CD4-positive, alpha-beta memory T cell (primary cell): ENCODE measurements at regions of chr10 and their contacts with region 1.

Region 1: DNA sequence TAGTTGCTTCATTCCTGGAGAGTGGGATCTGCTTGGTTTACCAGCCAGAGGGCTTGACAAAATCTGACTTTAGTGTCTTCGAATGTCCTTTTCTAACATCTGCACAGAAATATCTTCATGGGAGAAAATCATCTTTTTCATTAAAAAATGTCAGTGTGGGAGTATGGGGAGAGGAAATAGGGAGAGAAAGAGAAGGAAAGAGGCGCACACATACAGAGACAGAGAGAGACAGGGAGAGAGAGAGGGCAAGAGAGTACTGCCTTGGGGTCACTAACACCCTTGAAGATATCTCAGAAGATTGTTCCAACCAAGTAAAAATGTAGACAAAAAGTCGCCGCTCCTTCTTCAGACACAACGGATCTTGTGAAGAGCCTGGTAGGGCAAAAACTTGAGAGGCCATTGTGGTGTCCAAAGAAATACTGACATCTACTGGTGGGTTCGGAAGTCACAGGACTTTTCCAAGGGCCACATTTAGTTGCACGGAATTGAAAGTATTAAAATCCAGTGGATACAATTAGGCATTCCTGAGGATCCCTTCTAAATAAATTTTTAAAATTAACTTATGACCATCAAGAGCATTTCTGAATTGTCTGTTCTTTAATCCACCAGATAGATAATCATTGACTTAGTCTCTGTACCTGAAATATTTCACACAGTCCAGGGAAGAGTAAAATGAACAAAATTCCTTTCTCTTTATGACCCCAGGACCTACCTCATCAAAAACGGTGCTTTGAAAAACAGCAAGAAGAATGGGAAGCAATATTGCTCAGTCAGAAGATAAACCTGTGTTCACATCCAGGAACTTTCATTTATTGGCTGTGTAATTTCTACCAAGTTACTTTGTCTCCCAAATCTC is 29.7 kb downstream of the VIM start:
- DNase-seq: peak; percentile 49 to 71 (median 64)
- H3K4me3 ChIP-seq: no peak overlapping the region
- H3K4me3 Mint-ChIP-seq: peak overlapping the region in 1 of 8 donors; percentile 43
- H3K27ac ChIP-seq: no peak overlapping the region
- H3K27ac Mint-ChIP-seq: peak overlapping the region in 3 of 7 donors; percentile 0 to 84 (median 67)
- H3K4me1 ChIP-seq: no peaks in the 10 kb centered on the region
- H3K4me1 Mint-ChIP-seq: peaks cover 0 to 6% (median 4%) of the 10 kb centered on the region in 4 donors
- H3K27me3 ChIP-seq: no peaks in the 10 kb centered on the region
- H3K27me3 Mint-ChIP-seq: no peaks in the 10 kb centered on the region

Region 2: GRCh38 chr10:16822726-16823360 is 434.9 kb before region 1 on chr10:
- CTCF ChIA-PET with region 1: interaction called, 23 read pairs
- POLR2A ChIA-PET with region 1: no interaction called
- intact Hi-C with region 1: loop called (anchors 1 kb)
- DNase-seq: no peak
- H3K4me3 ChIP-seq: no peak overlapping the region
- H3K4me3 Mint-ChIP-seq: no peak overlapping the region
- H3K27ac ChIP-seq: no peak overlapping the region
- H3K27ac Mint-ChIP-seq: no peak overlapping the region
- H3K4me1 ChIP-seq: peaks cover 5% of the 10 kb centered on the region
- H3K4me1 Mint-ChIP-seq: peaks cover 2 to 14% (median 6%) of the 10 kb centered on the region in 4 donors
- H3K27me3 ChIP-seq: no peaks in the 10 kb centered on the region
- H3K27me3 Mint-ChIP-seq: no peaks in the 10 kb centered on the region

Region 3: DNA sequence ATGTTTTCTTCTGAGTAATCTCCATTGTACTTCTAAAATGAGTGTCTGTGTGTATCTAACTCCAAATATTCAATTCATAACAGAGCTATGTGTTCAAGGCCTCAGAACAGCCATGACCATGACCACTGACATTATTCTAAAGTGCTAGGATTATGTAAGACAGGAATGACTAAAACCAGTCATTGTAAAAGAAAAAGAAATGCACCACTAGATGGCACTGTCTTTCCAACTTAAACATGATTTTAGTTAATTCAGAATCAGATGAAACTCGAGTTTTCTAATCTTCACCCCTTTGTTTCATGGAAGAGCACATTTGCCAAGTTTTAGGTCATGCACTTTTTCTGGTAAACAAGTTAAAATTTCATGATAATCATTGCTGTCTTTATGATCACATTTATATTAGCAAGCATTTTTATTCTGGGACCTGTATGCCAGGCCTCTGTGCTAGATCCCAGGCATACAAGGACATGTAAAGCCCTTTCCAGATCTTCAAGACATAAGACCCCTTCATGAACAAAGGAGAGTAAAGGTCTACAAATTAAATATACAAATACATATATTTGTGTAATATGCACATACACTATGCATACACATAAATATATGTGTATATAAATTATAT is 414.3 kb before region 1 on chr10:
- CTCF ChIA-PET with region 1: interaction called, 43 read pairs
- POLR2A ChIA-PET with region 1: no interaction called
- intact Hi-C with region 1: loop called (anchors 1 kb)
- DNase-seq: peak in 4 of 5 donors; percentile 63 to 69 (median 67)
- H3K4me3 ChIP-seq: no peak overlapping the region
- H3K4me3 Mint-ChIP-seq: no peak overlapping the region
- H3K27ac ChIP-seq: no peak overlapping the region
- H3K27ac Mint-ChIP-seq: peak overlapping the region in 1 of 7 donors; percentile 31
- H3K4me1 ChIP-seq: no peaks in the 10 kb centered on the region
- H3K4me1 Mint-ChIP-seq: peaks cover 0 to 3% (median 0%) of the 10 kb centered on the region in 4 donors
- H3K27me3 ChIP-seq: no peaks in the 10 kb centered on the region
- H3K27me3 Mint-ChIP-seq: no peaks in the 10 kb centered on the region

Region 4: DNA sequence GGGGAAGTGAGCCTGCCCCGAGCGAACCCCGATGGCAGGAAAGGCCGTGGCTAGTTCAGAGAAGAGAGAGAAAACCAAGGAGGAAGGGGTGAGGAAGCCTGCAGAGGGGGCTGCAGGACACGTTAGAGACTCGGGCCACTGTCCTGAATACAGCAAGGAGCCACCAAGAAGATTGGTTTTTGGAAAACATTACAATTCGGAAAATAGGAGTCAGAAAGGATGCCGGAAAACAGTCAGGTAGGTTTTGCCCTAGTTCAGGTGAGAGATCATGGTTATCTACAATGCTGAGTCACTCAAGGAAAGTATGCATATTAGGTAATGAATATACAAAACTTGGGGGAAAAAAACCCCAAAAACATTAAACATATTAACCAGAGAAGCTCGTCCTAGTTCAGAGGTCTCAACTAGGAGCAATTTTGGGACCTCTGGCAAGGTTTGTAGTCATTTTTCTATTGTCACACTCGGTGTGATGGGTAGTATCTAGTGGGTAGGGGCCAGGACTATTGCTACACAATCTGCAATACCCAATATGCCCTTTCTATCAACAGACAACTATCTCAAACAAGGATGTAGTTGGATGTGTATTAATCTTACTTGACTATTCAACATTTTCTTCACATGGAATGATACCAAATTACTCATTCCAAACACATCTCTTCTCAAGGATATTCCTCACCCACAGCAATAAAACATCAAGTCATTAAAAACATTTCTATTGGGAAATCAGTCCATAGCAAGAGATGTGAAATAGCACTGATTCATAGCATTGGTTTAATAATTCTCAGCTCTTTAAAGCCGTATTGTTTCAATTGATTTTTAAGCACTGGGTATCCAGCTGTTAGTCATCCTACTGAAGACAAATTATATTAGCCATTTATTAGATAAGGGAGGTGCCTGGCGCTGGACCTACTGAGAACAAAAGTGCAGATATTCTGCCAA is 366.1 kb before region 1 on chr10:
- CTCF ChIA-PET with region 1: interaction called, 3 read pairs
- POLR2A ChIA-PET with region 1: no interaction called
- intact Hi-C with region 1: loop called (anchors 1 kb)
- DNase-seq: peak; percentile 20 to 47 (median 37)
- H3K4me3 ChIP-seq: peak overlapping the region in 1 of 2 donors; percentile 11
- H3K4me3 Mint-ChIP-seq: peak overlapping the region; percentile 64 to 84 (median 78)
- H3K27ac ChIP-seq: no peak overlapping the region
- H3K27ac Mint-ChIP-seq: peak overlapping the region in 6 of 7 donors; percentile 18 to 86 (median 61)
- H3K4me1 ChIP-seq: peaks cover 10% of the 10 kb centered on the region
- H3K4me1 Mint-ChIP-seq: peaks cover 6 to 13% (median 9%) of the 10 kb centered on the region in 4 donors
- H3K27me3 ChIP-seq: no peaks in the 10 kb centered on the region
- H3K27me3 Mint-ChIP-seq: no peaks in the 10 kb centered on the region

Region 5: DNA sequence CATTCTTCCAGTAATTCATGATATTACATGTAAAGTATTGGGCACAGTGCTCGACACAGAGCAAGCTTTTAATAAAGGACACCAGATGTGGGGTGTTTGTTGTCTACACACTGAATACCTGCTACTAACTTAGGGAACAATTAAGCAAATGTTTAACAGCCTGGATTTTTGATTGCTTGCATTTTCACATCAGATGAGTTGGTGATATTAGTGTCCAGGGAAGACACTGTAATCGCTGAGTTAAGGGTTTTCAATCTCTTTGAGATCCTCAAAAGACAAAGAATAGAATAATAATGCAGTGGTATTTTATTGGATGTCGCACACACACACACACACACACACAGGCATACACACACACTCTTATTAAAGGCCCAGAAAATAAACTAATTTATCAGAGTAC is 49.4 kb after region 1 on chr10:
- CTCF ChIA-PET with region 1: no interaction called
- POLR2A ChIA-PET with region 1: no interaction called
- intact Hi-C with region 1: no loop called
- DNase-seq: no peak
- H3K4me3 ChIP-seq: no peak overlapping the region
- H3K4me3 Mint-ChIP-seq: no peak overlapping the region
- H3K27ac ChIP-seq: no peak overlapping the region
- H3K27ac Mint-ChIP-seq: no peak overlapping the region
- H3K4me1 ChIP-seq: no peaks in the 10 kb centered on the region
- H3K4me1 Mint-ChIP-seq: no peaks in the 10 kb centered on the region
- H3K27me3 ChIP-seq: no peaks in the 10 kb centered on the region
- H3K27me3 Mint-ChIP-seq: peaks cover 21 to 35% of the 10 kb centered on the region in 2 donors